Activated naive CD4-positive, alpha-beta T cell treated with anti-CD3 and anti-CD28 coated beads for 36 hours (primary cell): ENCODE measurements at regions of chr1 and their contacts with region 1.

Region 1: DNA sequence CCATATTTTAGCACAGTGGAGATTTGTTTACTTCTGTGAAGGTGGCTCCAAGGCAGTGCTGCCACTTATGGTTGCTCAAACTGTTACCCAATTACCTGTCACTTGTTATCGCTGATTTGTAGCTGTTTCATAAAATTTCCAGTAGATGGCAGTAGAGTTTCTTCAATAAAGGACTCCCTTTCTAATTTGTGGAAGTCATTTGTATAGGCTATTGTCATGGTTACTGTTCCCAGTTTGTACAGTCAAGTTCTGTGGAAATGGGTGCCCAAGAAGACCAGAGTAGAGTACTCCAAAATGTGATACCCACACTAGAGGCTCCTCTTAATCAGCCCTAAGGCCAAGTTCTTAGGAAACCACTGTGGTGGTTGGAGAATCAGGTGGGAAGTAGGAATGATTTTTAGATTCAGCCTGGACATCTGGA is 186.1 kb downstream of the CLEC20A start:
- DNase-seq: no peak
- H3K4me3 Mint-ChIP-seq: no peak overlapping the region
- H3K27ac Mint-ChIP-seq: no peak overlapping the region
- H3K4me1 Mint-ChIP-seq: no peaks in the 10 kb centered on the region
- H3K27me3 Mint-ChIP-seq: peaks cover 10% of the 10 kb centered on the region

Region 2: GRCh38 chr1:178262120-178262500 is 48.6 kb before region 1 on chr1:
- CTCF ChIA-PET with region 1: no interaction called
- intact Hi-C with region 1: no loop called
- DNase-seq: no peak
- H3K4me3 Mint-ChIP-seq: no peak overlapping the region
- H3K27ac Mint-ChIP-seq: no peak overlapping the region
- H3K4me1 Mint-ChIP-seq: no peaks in the 10 kb centered on the region
- H3K27me3 Mint-ChIP-seq: no peaks in the 10 kb centered on the region

Region 3: GRCh38 chr1:178300352-178300699 is 10.4 kb before region 1 on chr1:
- CTCF ChIA-PET with region 1: interaction called, 28 read pairs
- intact Hi-C with region 1: no loop called
- DNase-seq: no peak
- H3K4me3 Mint-ChIP-seq: no peak overlapping the region
- H3K27ac Mint-ChIP-seq: no peak overlapping the region
- H3K4me1 Mint-ChIP-seq: no peaks in the 10 kb centered on the region
- H3K27me3 Mint-ChIP-seq: peaks cover 4% of the 10 kb centered on the region

Region 4: DNA sequence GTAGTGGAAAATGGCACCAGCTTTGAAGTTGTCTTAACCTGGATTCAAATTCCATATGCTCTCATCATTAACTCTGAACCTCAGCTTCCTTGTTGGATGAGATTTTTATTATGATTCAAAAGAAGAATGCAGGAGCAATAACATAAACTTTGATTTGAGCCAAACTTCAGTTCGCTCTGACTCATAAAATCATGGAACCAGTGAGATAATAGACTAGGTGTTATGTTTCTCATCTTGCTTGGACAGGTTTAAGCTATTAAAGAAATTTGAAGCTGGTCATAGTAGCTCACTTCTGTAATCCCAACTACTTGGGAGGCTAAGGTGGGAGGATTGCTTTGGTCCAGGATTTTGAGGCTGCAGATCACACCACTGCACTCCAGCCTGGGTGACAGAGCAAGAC is 13.3 kb after region 1 on chr1:
- CTCF ChIA-PET with region 1: interaction called, 12 read pairs
- intact Hi-C with region 1: no loop called
- DNase-seq: no peak
- H3K4me3 Mint-ChIP-seq: no peak overlapping the region
- H3K27ac Mint-ChIP-seq: no peak overlapping the region
- H3K4me1 Mint-ChIP-seq: no peaks in the 10 kb centered on the region
- H3K27me3 Mint-ChIP-seq: peaks cover 8% of the 10 kb centered on the region

Region 5: GRCh38 chr1:178354816-178355215 is 44.1 kb after region 1 on chr1:
- CTCF ChIA-PET with region 1: no interaction called
- intact Hi-C with region 1: no loop called
- DNase-seq: no peak
- H3K4me3 Mint-ChIP-seq: no peak overlapping the region
- H3K27ac Mint-ChIP-seq: no peak overlapping the region
- H3K4me1 Mint-ChIP-seq: no peaks in the 10 kb centered on the region
- H3K27me3 Mint-ChIP-seq: no peaks in the 10 kb centered on the region

Region 6: GRCh38 chr1:178501705-178502329 is 191.1 kb after region 1 on chr1:
- CTCF ChIA-PET with region 1: interaction called, 39 read pairs
- intact Hi-C with region 1: loop called (anchors 2 kb)
- DNase-seq: peak; percentile 75
- H3K4me3 Mint-ChIP-seq: no peak overlapping the region
- H3K27ac Mint-ChIP-seq: no peak overlapping the region
- H3K4me1 Mint-ChIP-seq: no peaks in the 10 kb centered on the region
- H3K27me3 Mint-ChIP-seq: peaks cover 2% of the 10 kb centered on the region

Region 7: GRCh38 chr1:178532392-178532791 is 221.7 kb after region 1 on chr1:
- CTCF ChIA-PET with region 1: interaction called, 6 read pairs
- intact Hi-C with region 1: loop called (anchors 2 kb)
- DNase-seq: peak; percentile 84
- H3K4me3 Mint-ChIP-seq: no peak overlapping the region
- H3K27ac Mint-ChIP-seq: no peak overlapping the region
- H3K4me1 Mint-ChIP-seq: no peaks in the 10 kb centered on the region
- H3K27me3 Mint-ChIP-seq: no peaks in the 10 kb centered on the region

Region 8: DNA sequence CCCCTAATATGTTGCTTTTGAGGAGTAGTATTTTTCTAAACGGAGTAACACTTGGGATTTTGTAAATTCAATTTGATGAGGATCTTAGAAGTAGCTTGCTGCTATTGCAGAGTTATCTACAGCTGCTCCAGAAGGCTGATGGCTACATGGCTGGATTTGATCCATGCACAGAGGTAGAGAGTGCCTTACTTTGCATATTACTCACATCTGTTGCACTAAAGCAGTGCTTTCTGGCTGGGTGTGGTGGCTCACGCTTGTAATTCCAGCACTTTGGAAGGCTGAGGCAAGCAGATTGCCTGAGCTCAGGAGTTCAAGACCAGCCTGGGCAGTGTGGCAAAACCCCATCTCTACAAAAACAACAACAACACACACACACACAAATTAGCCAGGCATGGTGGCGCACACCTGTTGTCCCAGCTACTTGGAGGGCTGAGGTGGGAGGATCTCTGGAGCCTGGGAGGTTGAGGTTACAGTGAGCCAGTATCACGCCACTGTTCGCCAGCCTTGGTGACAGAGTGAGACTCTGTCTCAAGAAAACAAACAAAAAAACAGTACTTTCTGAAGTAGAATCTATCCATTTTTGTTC is 439.0 kb after region 1 on chr1:
- CTCF ChIA-PET with region 1: no interaction called
- intact Hi-C with region 1: loop called (anchors 5 kb)
- DNase-seq: no peak
- H3K4me3 Mint-ChIP-seq: no peak overlapping the region
- H3K27ac Mint-ChIP-seq: no peak overlapping the region
- H3K4me1 Mint-ChIP-seq: no peaks in the 10 kb centered on the region
- H3K27me3 Mint-ChIP-seq: no peaks in the 10 kb centered on the region